Naive thymus-derived CD4-positive, alpha-beta T cell (primary cell): ENCODE measurements at regions of chr12 and their contacts with region 1.

Region 1: GRCh38 chr12:56387152-56387736 is 24.6 kb upstream of the APOF start:
- DNase-seq: no peak
- ATAC-seq: no peak
- H3K4me3 ChIP-seq: no peak overlapping the region
- H3K4me3 Mint-ChIP-seq: no peak overlapping the region
- H3K27ac ChIP-seq: no peak overlapping the region
- H3K27ac Mint-ChIP-seq: no peak overlapping the region
- H3K4me1 ChIP-seq: no peaks in the 10 kb centered on the region
- H3K4me1 Mint-ChIP-seq: peaks cover 0 to 3% (median 0%) of the 10 kb centered on the region in 7 donors
- H3K27me3 ChIP-seq: no peaks in the 10 kb centered on the region
- H3K27me3 Mint-ChIP-seq: peaks cover 0 to 2% (median 0%) of the 10 kb centered on the region in 5 donors

Region 2: DNA sequence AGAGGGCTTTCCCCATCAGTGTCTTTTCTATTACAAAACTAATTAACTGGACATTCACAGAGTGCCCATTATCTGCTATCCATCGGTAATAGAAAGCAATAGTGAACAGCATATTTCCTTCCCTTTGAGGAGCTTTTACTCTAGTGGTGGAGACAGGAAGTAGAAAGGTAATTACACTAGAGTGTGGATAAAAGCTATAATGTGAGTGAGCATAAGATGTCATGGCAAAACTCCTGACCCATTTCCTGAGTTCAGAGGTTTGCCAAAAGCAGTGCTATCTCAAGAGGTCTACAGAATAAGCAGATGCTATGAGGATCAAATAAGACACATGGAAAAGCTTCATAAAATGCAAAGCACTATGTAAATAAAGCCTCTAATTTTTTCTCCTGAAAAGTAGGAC is 37.9 kb after region 1 on chr12:
- CTCF ChIA-PET with region 1: interaction called, 3 read pairs
- POLR2A ChIA-PET with region 1: no interaction called
- intact Hi-C with region 1: loop called in 1 of 2 experiments (anchors 5 kb)
- DNase-seq: peak in 6 of 9 donors; percentile 7 to 45 (median 35)
- ATAC-seq: peak; percentile 42
- H3K4me3 ChIP-seq: no peak overlapping the region
- H3K4me3 Mint-ChIP-seq: peak overlapping the region in 8 of 10 donors; percentile 39 to 73 (median 57)
- H3K27ac ChIP-seq: peak overlapping the region; percentile 38
- H3K27ac Mint-ChIP-seq: peak overlapping the region; percentile 33 to 91 (median 85)
- H3K4me1 ChIP-seq: peaks cover 0 to 12% of the 10 kb centered on the region in 2 donors
- H3K4me1 Mint-ChIP-seq: peaks cover 10 to 26% (median 15%) of the 10 kb centered on the region in 7 donors
- H3K27me3 ChIP-seq: no peaks in the 10 kb centered on the region
- H3K27me3 Mint-ChIP-seq: no peaks in the 10 kb centered on the region